Right cardiac atrium (tissue), 5 donors: ENCODE measurements at regions of chr19 and their contacts with region 1.

Region 1: DNA sequence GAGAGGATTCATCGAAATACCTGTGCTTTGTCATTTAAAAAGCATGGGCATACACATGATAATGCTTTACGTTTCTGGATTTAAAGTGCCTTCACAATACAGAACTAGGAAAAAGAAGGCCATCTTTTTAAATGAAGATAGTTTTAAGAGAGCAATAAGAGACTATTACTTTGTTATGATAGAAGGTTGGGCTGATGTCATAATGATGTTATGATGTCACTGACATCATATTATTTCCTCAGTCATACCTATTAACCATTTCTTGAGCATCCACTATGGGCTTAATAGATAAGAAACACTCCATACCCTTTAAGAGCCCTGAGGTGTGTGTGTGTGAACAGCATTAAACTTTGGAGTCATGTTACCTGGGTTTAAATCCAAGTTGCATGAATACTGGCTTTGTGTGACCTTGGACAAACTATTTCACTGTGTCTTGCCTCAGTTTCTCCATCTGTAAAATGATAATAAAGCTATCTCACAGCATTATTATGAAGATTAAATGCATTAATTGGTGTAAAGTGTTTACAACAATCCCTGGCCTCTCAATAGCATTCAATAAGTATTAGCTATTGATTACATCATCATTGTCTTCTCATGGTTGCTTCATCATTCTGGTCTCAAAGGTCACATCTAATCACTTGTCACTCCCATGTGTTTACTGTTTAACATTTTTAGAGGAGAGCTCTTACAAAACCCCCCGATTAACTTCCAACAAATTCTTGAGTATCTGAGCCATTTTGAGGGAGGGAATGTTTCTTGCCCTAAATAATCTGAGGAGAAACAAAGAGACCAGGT is 11.1 kb downstream of the ZNF181 start:
- DNase-seq: no peak
- ATAC-seq: no peak
- H3K4me3 ChIP-seq: no peak overlapping the region
- H3K27ac ChIP-seq: no peak overlapping the region
- H3K4me1 ChIP-seq: no peaks in the 10 kb centered on the region
- H3K27me3 ChIP-seq: no peaks in the 10 kb centered on the region

Region 2: GRCh38 chr19:34539396-34539795 is 205.7 kb before region 1 on chr19:
- intact Hi-C with region 1: loop called in 1 of 4 experiments (anchors 5 kb)
- DNase-seq: no peak
- ATAC-seq: no peak
- H3K4me3 ChIP-seq: no peak overlapping the region
- H3K27ac ChIP-seq: no peak overlapping the region
- H3K4me1 ChIP-seq: no peaks in the 10 kb centered on the region
- H3K27me3 ChIP-seq: no peaks in the 10 kb centered on the region

Region 3: GRCh38 chr19:34556488-34556887 is 188.6 kb before region 1 on chr19:
- intact Hi-C with region 1: no loop called
- DNase-seq: peak; percentile 52 to 76 (median 70)
- ATAC-seq: peak; percentile 76 to 77
- H3K4me3 ChIP-seq: no peak overlapping the region
- H3K27ac ChIP-seq: no peak overlapping the region
- H3K4me1 ChIP-seq: peaks cover 1% of the 10 kb centered on the region
- H3K27me3 ChIP-seq: no peaks in the 10 kb centered on the region

Region 4: DNA sequence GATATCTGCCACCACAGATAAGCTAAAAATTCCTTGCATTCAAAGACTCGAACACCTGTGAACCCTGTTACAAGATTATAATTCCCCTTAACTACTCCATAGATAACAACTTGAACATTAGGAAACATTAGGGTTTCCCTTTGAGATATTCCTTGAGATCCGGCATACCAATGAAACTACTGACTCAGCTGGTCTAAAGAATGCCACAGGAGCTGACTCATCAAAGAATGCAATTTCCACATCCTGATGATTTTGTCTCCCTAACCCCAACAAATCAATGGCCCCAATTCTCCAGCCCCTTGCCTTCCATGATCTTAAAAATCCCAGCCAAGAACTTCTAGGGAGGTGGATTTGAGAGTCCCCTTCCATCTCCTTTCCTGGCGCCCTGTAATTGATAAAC is 63.5 kb after region 1 on chr19:
- intact Hi-C with region 1: no loop called
- DNase-seq: no peak
- ATAC-seq: no peak
- H3K4me3 ChIP-seq: no peak overlapping the region
- H3K27ac ChIP-seq: no peak overlapping the region
- H3K4me1 ChIP-seq: no peaks in the 10 kb centered on the region
- H3K27me3 ChIP-seq: no peaks in the 10 kb centered on the region

Region 5: DNA sequence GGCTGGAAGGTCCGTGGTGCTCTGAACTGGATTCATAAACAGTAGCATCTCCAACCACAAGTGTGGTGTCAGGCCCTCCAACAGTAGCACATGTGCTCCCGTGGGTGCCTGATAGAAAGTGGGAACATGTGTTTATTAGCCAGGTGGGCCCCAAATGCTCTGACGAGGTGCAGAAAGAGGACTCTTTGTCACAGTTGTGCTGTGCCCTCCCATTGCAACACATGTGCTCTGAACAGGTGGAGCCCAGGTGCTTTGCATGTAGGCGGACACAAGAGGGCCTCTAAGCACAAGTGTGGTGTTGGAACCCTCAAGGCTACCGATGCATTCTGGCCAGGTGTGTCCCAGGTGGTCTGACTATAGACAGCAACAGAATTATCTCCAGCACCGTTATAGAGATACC is 106.3 kb after region 1 on chr19:
- intact Hi-C with region 1: no loop called
- DNase-seq: no peak
- ATAC-seq: no peak
- H3K4me3 ChIP-seq: no peak overlapping the region
- H3K27ac ChIP-seq: no peak overlapping the region
- H3K4me1 ChIP-seq: no peaks in the 10 kb centered on the region
- H3K27me3 ChIP-seq: no peaks in the 10 kb centered on the region